CD4-positive, alpha-beta memory T cell (primary cell): ENCODE measurements at regions of chr20 and their contacts with region 1.

Region 1: GRCh38 chr20:5788385-5788895 is 38.2 kb downstream of the SHLD1 start:
- DNase-seq: peak; percentile 79 to 84 (median 82)
- H3K4me3 ChIP-seq: no peak overlapping the region
- H3K4me3 Mint-ChIP-seq: no peak overlapping the region
- H3K27ac ChIP-seq: no peak overlapping the region
- H3K27ac Mint-ChIP-seq: peak overlapping the region in 6 of 7 donors; percentile 29 to 87 (median 72)
- H3K4me1 ChIP-seq: peaks cover 14% of the 10 kb centered on the region
- H3K4me1 Mint-ChIP-seq: peaks cover 9 to 20% (median 11%) of the 10 kb centered on the region in 4 donors
- H3K27me3 ChIP-seq: no peaks in the 10 kb centered on the region
- H3K27me3 Mint-ChIP-seq: no peaks in the 10 kb centered on the region

Region 2: GRCh38 chr20:5529331-5530148 is 258.9 kb before region 1 on chr20:
- CTCF ChIA-PET with region 1: interaction called, 150 read pairs
- POLR2A ChIA-PET with region 1: interaction called, 6 read pairs
- intact Hi-C with region 1: loop called (anchors 1 kb)
- DNase-seq: peak; percentile 75 to 85 (median 76)
- H3K4me3 ChIP-seq: no peak overlapping the region
- H3K4me3 Mint-ChIP-seq: peak overlapping the region; percentile 11 to 81 (median 70)
- H3K27ac ChIP-seq: no peak overlapping the region
- H3K27ac Mint-ChIP-seq: peak overlapping the region; percentile 15 to 92 (median 76)
- H3K4me1 ChIP-seq: peaks cover 3% of the 10 kb centered on the region
- H3K4me1 Mint-ChIP-seq: peaks cover 12 to 19% (median 15%) of the 10 kb centered on the region in 4 donors
- H3K27me3 ChIP-seq: no peaks in the 10 kb centered on the region
- H3K27me3 Mint-ChIP-seq: peaks cover 0 to 1% of the 10 kb centered on the region in 2 donors

Region 3: DNA sequence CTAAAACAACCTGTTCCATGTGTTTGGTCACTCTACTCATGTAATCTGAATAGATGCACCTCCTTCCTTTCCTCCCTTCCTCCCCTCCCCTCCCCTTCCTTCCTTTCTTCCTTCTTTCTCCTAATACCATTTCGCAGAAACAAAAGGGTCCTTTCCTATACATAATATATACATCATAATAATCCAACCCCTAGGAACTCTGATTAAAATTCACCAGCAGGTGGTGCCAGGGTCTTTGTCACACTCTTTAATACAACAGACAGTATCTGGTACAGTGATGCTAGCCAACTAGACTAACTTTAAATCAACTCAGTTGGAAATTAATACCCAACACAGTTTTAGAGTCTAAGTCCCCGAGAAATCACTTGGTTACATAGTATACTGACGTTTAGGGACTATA is 219.4 kb before region 1 on chr20:
- CTCF ChIA-PET with region 1: interaction called, 159 read pairs
- POLR2A ChIA-PET with region 1: interaction called, 4 read pairs
- intact Hi-C with region 1: loop called (anchors 1 kb)
- DNase-seq: peak; percentile 51 to 65 (median 61)
- H3K4me3 ChIP-seq: no peak overlapping the region
- H3K4me3 Mint-ChIP-seq: no peak overlapping the region
- H3K27ac ChIP-seq: no peak overlapping the region
- H3K27ac Mint-ChIP-seq: peak overlapping the region; percentile 8 to 89 (median 65)
- H3K4me1 ChIP-seq: peaks cover 19% of the 10 kb centered on the region
- H3K4me1 Mint-ChIP-seq: peaks cover 17 to 26% (median 21%) of the 10 kb centered on the region in 4 donors
- H3K27me3 ChIP-seq: no peaks in the 10 kb centered on the region
- H3K27me3 Mint-ChIP-seq: no peaks in the 10 kb centered on the region

Region 4: DNA sequence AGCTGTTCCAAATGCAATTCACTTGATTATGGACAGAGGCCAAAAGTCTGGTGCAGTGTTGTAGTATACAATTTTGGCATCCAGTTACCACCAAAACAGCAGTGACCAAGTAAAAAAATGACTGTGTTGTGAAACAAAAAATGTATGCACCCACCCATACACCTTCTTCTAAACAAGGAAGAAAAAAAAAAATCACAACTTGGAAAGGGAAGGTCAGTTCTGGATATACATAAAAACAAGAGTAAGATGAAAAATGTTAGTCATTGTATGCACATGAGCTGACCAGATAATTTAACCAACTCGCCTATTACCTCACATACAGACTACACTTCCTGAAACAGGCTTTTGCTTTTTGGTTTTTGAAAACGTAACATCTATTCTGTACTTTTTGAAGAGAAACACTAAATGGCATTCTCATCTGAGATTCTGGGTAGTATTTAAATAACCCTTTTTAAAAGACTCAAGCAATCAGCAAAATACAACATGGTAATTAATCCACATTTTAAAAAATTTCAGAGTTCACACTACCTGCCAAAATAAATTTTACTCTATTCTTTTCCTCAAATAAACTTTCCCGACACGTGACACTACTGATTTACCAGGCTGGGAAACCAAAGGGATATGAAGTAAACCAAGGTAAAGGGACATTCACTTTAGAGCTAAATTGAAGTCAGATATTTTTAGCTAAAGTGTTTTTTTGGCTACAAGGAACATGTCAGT is 179.8 kb before region 1 on chr20:
- CTCF ChIA-PET with region 1: interaction called, 9 read pairs
- POLR2A ChIA-PET with region 1: interaction called, 3 read pairs
- intact Hi-C with region 1: loop called (anchors 1 kb)
- DNase-seq: no peak
- H3K4me3 ChIP-seq: peak overlapping the region; percentile 96 to 98
- H3K4me3 Mint-ChIP-seq: peak overlapping the region; percentile 90 to 100 (median 98)
- H3K27ac ChIP-seq: peak overlapping the region; percentile 98
- H3K27ac Mint-ChIP-seq: peak overlapping the region; percentile 99 to 100 (median 99)
- H3K4me1 ChIP-seq: peaks cover 62% of the 10 kb centered on the region
- H3K4me1 Mint-ChIP-seq: peaks cover 36 to 66% (median 49%) of the 10 kb centered on the region in 4 donors
- H3K27me3 ChIP-seq: no peaks in the 10 kb centered on the region
- H3K27me3 Mint-ChIP-seq: peaks cover 0 to 2% of the 10 kb centered on the region in 2 donors

Region 5: DNA sequence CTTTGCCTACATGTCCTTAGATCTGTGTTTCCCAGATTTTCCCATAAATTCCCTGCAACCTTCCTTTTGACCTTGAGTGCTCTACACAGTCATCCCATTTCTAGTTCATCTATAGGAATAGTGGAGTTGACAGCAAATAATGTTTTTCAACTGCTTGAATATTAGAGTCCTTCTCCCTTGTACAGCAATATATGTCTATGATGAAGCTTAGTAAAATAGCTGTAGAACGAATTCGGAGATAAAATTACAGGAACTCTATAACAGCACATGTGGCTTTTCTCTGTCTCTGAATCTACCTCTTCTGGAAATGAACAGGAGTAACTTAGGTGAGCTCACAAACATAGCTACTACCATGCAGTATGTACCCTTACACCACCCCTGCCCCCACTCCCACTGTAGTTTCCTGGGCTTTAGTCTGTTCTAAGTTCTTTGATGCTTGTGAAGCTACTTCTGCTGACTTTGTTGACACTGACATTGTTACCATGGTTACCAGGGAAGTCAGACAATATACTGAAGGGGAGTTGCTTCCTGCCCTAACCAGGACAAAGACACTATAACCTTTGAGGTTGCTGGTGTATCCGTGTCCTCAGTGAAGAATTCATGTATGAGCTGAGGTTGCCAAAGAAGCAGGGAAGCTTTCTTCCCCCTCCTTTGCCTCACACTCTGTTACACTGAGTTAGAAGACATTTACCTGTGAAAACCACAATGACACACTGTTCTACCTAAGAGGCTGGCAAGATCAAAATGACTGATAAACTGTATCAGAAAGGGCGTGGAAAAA is 74.0 kb before region 1 on chr20:
- CTCF ChIA-PET with region 1: interaction called, 11 read pairs
- POLR2A ChIA-PET with region 1: interaction called, 4 read pairs
- intact Hi-C with region 1: loop called (anchors 1 kb)
- DNase-seq: peak; percentile 90 to 98 (median 96)
- H3K4me3 ChIP-seq: peak overlapping the region in 1 of 2 donors; percentile 14
- H3K4me3 Mint-ChIP-seq: peak overlapping the region; percentile 57 to 93 (median 74)
- H3K27ac ChIP-seq: peak overlapping the region; percentile 72
- H3K27ac Mint-ChIP-seq: peak overlapping the region; percentile 88 to 100 (median 99)
- H3K4me1 ChIP-seq: peaks cover 33% of the 10 kb centered on the region
- H3K4me1 Mint-ChIP-seq: peaks cover 32 to 46% (median 37%) of the 10 kb centered on the region in 4 donors
- H3K27me3 ChIP-seq: no peaks in the 10 kb centered on the region
- H3K27me3 Mint-ChIP-seq: peaks cover 0 to 2% of the 10 kb centered on the region in 2 donors

Region 6: DNA sequence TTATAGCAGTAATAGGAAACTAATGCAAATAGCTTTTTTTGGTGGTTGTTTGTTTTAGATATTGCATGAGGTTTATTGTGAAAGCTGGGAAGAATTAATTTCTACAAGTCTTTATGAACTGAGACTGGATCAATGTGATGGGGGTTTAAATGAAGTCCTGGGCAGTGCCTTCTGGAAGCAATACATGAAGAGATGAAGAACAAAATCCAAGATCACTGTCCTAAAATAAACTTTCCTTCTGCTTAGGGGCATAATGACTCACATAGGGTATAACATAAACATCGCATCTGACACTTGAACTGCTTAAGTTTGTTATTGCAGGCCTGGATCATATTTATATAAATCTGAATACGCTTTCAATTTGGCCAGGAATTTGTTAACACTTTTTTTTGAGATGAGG is 59.1 kb before region 1 on chr20:
- CTCF ChIA-PET with region 1: no interaction called
- POLR2A ChIA-PET with region 1: no interaction called
- intact Hi-C with region 1: no loop called
- DNase-seq: no peak
- H3K4me3 ChIP-seq: no peak overlapping the region
- H3K4me3 Mint-ChIP-seq: no peak overlapping the region
- H3K27ac ChIP-seq: no peak overlapping the region
- H3K27ac Mint-ChIP-seq: no peak overlapping the region
- H3K4me1 ChIP-seq: peaks cover 5% of the 10 kb centered on the region
- H3K4me1 Mint-ChIP-seq: peaks cover 5 to 10% (median 5%) of the 10 kb centered on the region in 4 donors
- H3K27me3 ChIP-seq: no peaks in the 10 kb centered on the region
- H3K27me3 Mint-ChIP-seq: no peaks in the 10 kb centered on the region

Region 7: DNA sequence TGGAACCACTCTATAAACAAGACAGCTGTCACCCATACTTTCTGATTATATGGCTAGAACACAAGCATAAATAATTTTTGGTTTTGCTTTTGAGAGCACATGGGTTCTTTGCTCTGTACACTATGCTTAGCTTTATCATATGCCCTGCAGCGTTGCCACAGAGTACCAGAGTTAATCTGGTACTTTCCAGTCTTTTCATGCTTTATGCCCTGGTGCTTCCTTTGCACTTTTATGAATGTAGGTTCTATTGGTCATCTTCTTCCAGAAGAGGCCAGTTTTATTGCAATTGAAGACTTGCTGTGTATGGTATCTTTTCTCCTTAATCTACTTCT is 17.5 kb before region 1 on chr20:
- CTCF ChIA-PET with region 1: no interaction called
- POLR2A ChIA-PET with region 1: no interaction called
- intact Hi-C with region 1: no loop called
- DNase-seq: no peak
- H3K4me3 ChIP-seq: no peak overlapping the region
- H3K4me3 Mint-ChIP-seq: no peak overlapping the region
- H3K27ac ChIP-seq: no peak overlapping the region
- H3K27ac Mint-ChIP-seq: peak overlapping the region in 4 of 7 donors; percentile 32 to 63 (median 48)
- H3K4me1 ChIP-seq: peaks cover 6% of the 10 kb centered on the region
- H3K4me1 Mint-ChIP-seq: peaks cover 19 to 31% (median 27%) of the 10 kb centered on the region in 4 donors
- H3K27me3 ChIP-seq: no peaks in the 10 kb centered on the region
- H3K27me3 Mint-ChIP-seq: no peaks in the 10 kb centered on the region

Region 8: DNA sequence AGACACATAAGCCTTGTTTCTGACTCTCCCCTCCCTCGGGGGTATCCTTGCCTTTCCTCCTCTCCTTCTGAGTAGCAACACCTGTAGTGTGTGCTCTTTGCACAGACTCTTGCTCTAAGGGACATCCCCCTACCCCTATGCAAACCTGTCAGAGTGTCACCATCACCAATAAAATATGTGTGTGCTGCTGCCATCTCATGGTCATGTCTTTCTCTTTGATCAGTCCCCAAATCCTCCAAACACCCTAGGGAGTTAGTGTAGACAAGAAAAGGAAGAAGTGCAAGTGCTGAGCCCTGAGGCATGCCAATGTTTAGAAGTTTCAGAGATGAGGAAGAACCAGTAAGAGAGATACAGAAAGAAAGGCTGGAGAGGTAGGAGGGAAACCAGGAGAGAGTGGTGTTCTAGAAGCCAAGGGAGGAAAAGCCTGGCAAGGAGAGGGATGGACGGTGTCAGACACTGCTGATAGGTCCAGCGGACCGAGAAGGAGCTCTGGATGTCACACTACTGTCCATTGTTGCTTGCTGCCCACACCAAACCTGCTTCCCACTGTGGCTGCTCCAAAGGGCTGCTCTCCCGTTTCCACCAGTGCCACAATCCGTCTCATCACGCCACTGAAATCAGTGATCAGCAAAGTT is 145.5 kb after region 1 on chr20:
- CTCF ChIA-PET with region 1: no interaction called
- POLR2A ChIA-PET with region 1: no interaction called
- intact Hi-C with region 1: loop called (anchors 1 kb)
- DNase-seq: peak in 1 of 5 donors; percentile 23
- H3K4me3 ChIP-seq: no peak overlapping the region
- H3K4me3 Mint-ChIP-seq: no peak overlapping the region
- H3K27ac ChIP-seq: no peak overlapping the region
- H3K27ac Mint-ChIP-seq: peak overlapping the region in 1 of 7 donors; percentile 74
- H3K4me1 ChIP-seq: no peaks in the 10 kb centered on the region
- H3K4me1 Mint-ChIP-seq: peaks cover 0 to 3% (median 0%) of the 10 kb centered on the region in 4 donors
- H3K27me3 ChIP-seq: no peaks in the 10 kb centered on the region
- H3K27me3 Mint-ChIP-seq: peaks cover 0 to 2% of the 10 kb centered on the region in 2 donors

Region 9: GRCh38 chr20:6074145-6074561 is 285.7 kb after region 1 on chr20:
- CTCF ChIA-PET with region 1: interaction called, 5 read pairs
- POLR2A ChIA-PET with region 1: no interaction called
- intact Hi-C with region 1: loop called (anchors 5 kb)
- DNase-seq: peak in 3 of 5 donors; percentile 3 to 16 (median 5)
- H3K4me3 ChIP-seq: no peak overlapping the region
- H3K4me3 Mint-ChIP-seq: no peak overlapping the region
- H3K27ac ChIP-seq: no peak overlapping the region
- H3K27ac Mint-ChIP-seq: no peak overlapping the region
- H3K4me1 ChIP-seq: no peaks in the 10 kb centered on the region
- H3K4me1 Mint-ChIP-seq: peaks cover 0 to 3% (median 0%) of the 10 kb centered on the region in 4 donors
- H3K27me3 ChIP-seq: no peaks in the 10 kb centered on the region
- H3K27me3 Mint-ChIP-seq: peaks cover 5 to 6% of the 10 kb centered on the region in 2 donors